HCT116 (cell line): ENCODE measurements at regions of chr3 and their contacts with region 1.

Region 1: DNA sequence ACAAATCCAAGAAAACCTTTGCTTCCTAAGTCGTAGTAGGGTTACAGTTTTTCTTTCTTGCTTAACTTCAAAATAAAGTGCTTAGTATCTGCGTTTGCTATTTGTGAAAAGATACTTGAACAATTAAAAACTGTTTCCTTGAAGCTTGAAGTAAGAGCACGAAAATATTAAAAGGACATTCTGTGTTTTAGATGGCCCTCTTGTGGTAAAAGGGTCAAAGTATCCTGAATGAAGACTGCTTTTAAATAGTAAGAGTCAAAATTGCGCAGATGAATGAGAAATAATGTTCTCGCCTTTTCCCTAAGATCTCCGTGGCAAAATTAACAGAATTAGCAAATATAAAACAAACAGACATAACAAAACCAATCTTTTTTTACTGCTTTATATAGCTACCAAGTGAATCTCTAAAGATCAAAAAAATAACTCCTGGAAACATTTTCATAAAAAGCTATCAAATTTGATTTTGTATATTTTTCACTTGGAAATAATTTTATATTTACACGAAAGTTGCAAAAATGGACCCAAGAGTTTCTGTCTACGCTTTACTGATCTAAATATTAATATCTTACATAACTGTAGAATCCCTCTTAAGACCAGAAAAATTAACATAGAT is 175.4 kb downstream of the MBNL1 start:
- DNase-seq: peak; percentile 38
- ATAC-seq: peak; percentile 61
- H3K4me3 ChIP-seq: no peak overlapping the region
- H3K27ac ChIP-seq: peak overlapping the region; percentile 17; the same call in 1 of the 2 replicates
- H3K4me1 ChIP-seq: peaks cover 8 to 12% of the 10 kb centered on the region in 2 experiments; a peak in 3 of 4 replicates
- H3K27me3 ChIP-seq: no peaks in the 10 kb centered on the region
- CTCF ChIP-seq: peak; percentile 49 to 69 (median 52); a peak in 5 of 6 replicates
- POLR2A ChIP-seq: no peak
- RAD21 ChIP-seq: peak; percentile 86

Region 2: GRCh38 chr3:152026033-152026556 is 418.0 kb before region 1 on chr3:
- CTCF ChIA-PET with region 1: interaction called, 17 read pairs
- POLR2A ChIA-PET with region 1: no interaction called
- RAD21 ChIA-PET with region 1: no interaction called
- intact Hi-C with region 1: loop called (anchors 1 kb)
- DNase-seq: peak; percentile 62
- ATAC-seq: peak; percentile 2; the same call in 1 of the 2 replicates
- H3K4me3 ChIP-seq: peak overlapping the region in 1 of 2 experiments; percentile 16; a peak in 2 of 4 replicates
- H3K27ac ChIP-seq: peak overlapping the region; percentile 97; the same call in 1 of the 2 replicates
- H3K4me1 ChIP-seq: peaks cover 44 to 65% of the 10 kb centered on the region in 2 experiments
- H3K27me3 ChIP-seq: no peaks in the 10 kb centered on the region
- CTCF ChIP-seq: peak in 2 of 3 experiments; percentile 39 to 45; a peak in 3 of 6 replicates
- POLR2A ChIP-seq: no peak
- RAD21 ChIP-seq: peak; percentile 59

Region 3: GRCh38 chr3:152071924-152072323 is 372.2 kb before region 1 on chr3:
- CTCF ChIA-PET with region 1: interaction called, 5 read pairs
- POLR2A ChIA-PET with region 1: no interaction called
- RAD21 ChIA-PET with region 1: no interaction called
- intact Hi-C with region 1: loop called (anchors 2 kb)
- DNase-seq: peak; percentile 1
- ATAC-seq: peak; percentile 61; the same call in 1 of the 2 replicates
- H3K4me3 ChIP-seq: no peak overlapping the region
- H3K27ac ChIP-seq: no peak overlapping the region
- H3K4me1 ChIP-seq: no peaks in the 10 kb centered on the region
- H3K27me3 ChIP-seq: no peaks in the 10 kb centered on the region
- CTCF ChIP-seq: peak in 2 of 3 experiments; percentile 11 to 24; a peak in 1 of 6 replicates
- POLR2A ChIP-seq: no peak
- RAD21 ChIP-seq: peak; percentile 45

Region 4: GRCh38 chr3:152183473-152183872 is 260.7 kb before region 1 on chr3:
- CTCF ChIA-PET with region 1: interaction called, 12 read pairs
- POLR2A ChIA-PET with region 1: no interaction called
- RAD21 ChIA-PET with region 1: interaction called, 4 to 5 read pairs
- intact Hi-C with region 1: loop called (anchors 2 kb)
- DNase-seq: peak; percentile 46
- ATAC-seq: peak; percentile 93
- H3K4me3 ChIP-seq: no peak overlapping the region
- H3K27ac ChIP-seq: no peak overlapping the region
- H3K4me1 ChIP-seq: no peaks in the 10 kb centered on the region
- H3K27me3 ChIP-seq: no peaks in the 10 kb centered on the region
- CTCF ChIP-seq: peak; percentile 17 to 58 (median 50); a peak in 4 of 6 replicates
- POLR2A ChIP-seq: no peak
- RAD21 ChIP-seq: peak; percentile 68